ENCODE measurements at regions of chr2 and their contacts with region 1.

Region 1: DNA sequence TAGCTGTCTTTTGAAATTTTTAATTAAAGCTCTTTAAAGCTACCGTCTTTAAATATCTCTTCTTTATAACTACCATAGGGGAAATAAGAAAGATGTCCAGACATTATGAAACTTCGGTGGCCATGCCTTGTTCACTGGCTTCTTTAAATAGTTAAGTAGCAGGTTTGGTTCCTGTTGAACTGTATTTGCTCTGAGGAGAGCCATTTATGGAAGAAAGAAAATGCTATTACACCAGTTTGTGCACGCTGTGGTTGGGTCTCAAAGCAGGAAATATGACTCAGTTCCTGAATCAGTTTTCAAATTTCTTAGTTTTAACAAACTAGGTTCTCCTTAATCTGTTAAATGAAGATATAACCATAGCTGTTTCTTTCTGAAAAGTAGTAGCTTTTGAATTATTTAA is 12.2 kb downstream of the ARPC2 start:
- DNase-seq: peak in 4 of 5 donors; percentile 24 to 59 (median 49)
- H3K4me3 ChIP-seq: no peak overlapping the region
- H3K4me3 Mint-ChIP-seq: peak overlapping the region; percentile 51 to 82 (median 75)
- H3K27ac ChIP-seq: no peak overlapping the region
- H3K27ac Mint-ChIP-seq: peak overlapping the region; percentile 73 to 94 (median 92)
- H3K4me1 ChIP-seq: peaks cover 58% of the 10 kb centered on the region
- H3K4me1 Mint-ChIP-seq: peaks cover 74 to 87% (median 85%) of the 10 kb centered on the region in 3 donors
- H3K27me3 ChIP-seq: no peaks in the 10 kb centered on the region
- H3K27me3 Mint-ChIP-seq: no peaks in the 10 kb centered on the region

Region 2: GRCh38 chr2:218216674-218217359 is 12.4 kb before region 1 on chr2 and contains the start of gene ARPC2:
- CTCF ChIA-PET with region 1: interaction called, 13 read pairs
- POLR2A ChIA-PET with region 1: interaction called, 10 read pairs
- DNase-seq: peak; percentile 93 to 97 (median 96)
- H3K4me3 ChIP-seq: peak within 1 kb of the TSS; percentile 87
- H3K4me3 Mint-ChIP-seq: peak within 1 kb of the TSS; percentile 85 to 97 (median 93)
- H3K27ac ChIP-seq: peak within 1 kb of the TSS; percentile 92
- H3K27ac Mint-ChIP-seq: peak within 1 kb of the TSS; percentile 91 to 100 (median 98)
- H3K4me1 ChIP-seq: peaks cover 34% of the 10 kb centered on the region
- H3K4me1 Mint-ChIP-seq: peaks cover 36 to 43% (median 39%) of the 10 kb centered on the region in 3 donors
- H3K27me3 ChIP-seq: no peaks in the 10 kb centered on the region
- H3K27me3 Mint-ChIP-seq: peaks cover 0 to 1% of the 10 kb centered on the region in 2 donors
- total RNA-seq, gene ARPC2: 575 to 600 TPM

Region 3: DNA sequence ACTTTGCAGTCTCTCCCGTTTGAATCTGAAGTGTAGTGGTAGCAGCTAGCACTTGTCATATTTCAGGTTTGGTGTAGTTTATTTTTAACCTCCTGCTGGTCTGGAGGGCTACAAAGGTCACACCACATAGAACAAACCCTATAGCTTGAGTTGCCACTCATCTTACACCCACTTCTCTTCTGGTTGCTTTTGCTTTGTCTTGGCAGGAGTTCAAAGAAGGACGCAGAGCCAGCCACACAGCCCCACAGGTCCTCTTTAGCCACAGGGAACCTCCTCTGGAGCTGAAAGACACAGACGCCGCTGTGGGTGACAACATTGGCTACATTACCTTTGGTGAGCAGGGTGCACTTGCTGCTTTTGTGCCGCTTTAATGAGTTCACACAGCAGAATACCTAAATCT is 16.0 kb after region 1 on chr2:
- CTCF ChIA-PET with region 1: interaction called, 6 read pairs
- POLR2A ChIA-PET with region 1: interaction called, 12 read pairs
- DNase-seq: no peak
- H3K4me3 ChIP-seq: no peak overlapping the region
- H3K4me3 Mint-ChIP-seq: no peak overlapping the region
- H3K27ac ChIP-seq: no peak overlapping the region
- H3K27ac Mint-ChIP-seq: peak overlapping the region in 7 of 8 donors; percentile 18 to 91 (median 66)
- H3K4me1 ChIP-seq: peaks cover 11% of the 10 kb centered on the region
- H3K4me1 Mint-ChIP-seq: peaks cover 22 to 44% (median 41%) of the 10 kb centered on the region in 3 donors
- H3K27me3 ChIP-seq: no peaks in the 10 kb centered on the region
- H3K27me3 Mint-ChIP-seq: no peaks in the 10 kb centered on the region

Region 4: GRCh38 chr2:218312267-218312756 is 83.1 kb after region 1 on chr2:
- CTCF ChIA-PET with region 1: no interaction called
- POLR2A ChIA-PET with region 1: no interaction called
- DNase-seq: no peak
- H3K4me3 ChIP-seq: no peak overlapping the region
- H3K4me3 Mint-ChIP-seq: no peak overlapping the region
- H3K27ac ChIP-seq: no peak overlapping the region
- H3K27ac Mint-ChIP-seq: no peak overlapping the region
- H3K4me1 ChIP-seq: peaks cover 21% of the 10 kb centered on the region
- H3K4me1 Mint-ChIP-seq: peaks cover 15 to 20% (median 19%) of the 10 kb centered on the region in 3 donors
- H3K27me3 ChIP-seq: no peaks in the 10 kb centered on the region
- H3K27me3 Mint-ChIP-seq: no peaks in the 10 kb centered on the region